Right ventricle myocardium inferior (tissue), 1 donor: ENCODE measurements at regions of chr21 and their contacts with region 1.

Region 1: DNA sequence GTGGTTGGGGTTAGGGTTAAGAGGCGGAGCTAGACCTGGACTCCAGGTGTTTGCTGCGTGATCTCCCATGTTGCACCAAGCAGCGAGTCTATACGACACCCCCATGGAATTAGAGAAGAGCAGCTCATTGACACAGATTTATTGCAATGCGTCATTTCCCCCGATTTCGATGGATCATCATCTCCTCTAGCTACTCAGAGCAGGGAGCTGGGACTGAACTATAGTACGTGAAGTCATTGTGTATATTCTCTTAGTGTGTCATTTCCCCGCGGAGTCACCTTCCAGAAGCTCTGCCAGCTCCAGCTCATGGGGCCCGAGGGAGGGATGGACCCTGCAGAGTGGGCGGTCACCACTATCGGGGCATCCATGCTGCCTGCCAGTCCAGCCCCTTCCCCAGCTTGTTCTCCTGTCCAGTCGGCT is 7.5 kb upstream of the C2CD2 start:
- DNase-seq: no peak
- ATAC-seq: no peak

Region 2: DNA sequence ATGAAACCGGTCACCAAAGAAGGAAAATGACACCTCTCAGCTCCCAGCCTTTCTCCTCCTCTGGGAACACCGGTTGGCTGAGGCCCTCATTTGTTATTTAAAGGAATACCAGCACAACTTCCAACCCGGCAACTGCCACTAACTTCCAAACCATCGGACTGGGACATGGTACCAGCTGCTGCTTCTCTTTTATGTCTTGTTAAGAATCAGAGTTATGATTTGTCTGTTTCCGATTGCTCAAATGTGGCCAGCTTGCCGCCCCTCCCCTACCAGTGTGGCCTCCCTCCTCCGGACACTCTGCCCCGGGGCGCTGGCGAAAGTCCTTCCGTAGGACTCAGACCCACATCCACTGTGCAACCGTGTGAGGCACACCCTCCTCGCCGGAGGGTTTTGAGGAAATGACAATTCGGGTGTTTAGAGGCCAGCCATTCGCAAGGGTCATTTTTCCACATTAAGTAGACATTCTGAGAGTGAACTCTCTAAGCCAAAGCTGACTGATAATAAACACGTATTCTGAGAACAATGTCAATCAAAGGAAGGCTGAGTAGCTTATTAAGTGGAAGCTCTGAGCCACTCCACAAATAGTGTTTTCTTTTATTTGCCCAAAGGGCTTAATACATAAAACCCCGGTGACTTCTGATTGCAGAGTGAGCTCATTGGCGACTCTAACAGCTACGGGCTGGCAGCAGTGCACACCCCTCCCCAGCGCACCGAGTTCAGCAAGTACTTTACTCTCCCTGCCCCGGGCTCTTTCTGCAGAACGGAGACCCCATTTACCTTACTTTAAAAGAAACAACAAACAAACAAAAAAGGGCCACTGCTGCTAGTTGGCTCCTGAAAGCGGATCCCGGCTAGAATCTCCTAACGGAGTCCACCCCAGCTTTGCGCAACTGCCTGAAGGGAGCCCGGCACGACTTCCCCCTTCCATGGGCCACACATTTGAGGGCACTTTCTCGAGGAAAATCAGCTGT is 199.8 kb before region 1 on chr21:
- intact Hi-C with region 1: no loop called
- DNase-seq: peak; percentile 89
- ATAC-seq: peak; percentile 87

Region 3: GRCh38 chr21:42004406-42005199 is 43.3 kb after region 1 on chr21:
- intact Hi-C with region 1: loop called (anchors 1 kb)
- DNase-seq: no peak
- ATAC-seq: no peak

Region 4: GRCh38 chr21:42187976-42188653 is 226.8 kb after region 1 on chr21:
- intact Hi-C with region 1: no loop called
- DNase-seq: no peak
- ATAC-seq: peak; percentile 63